ENCODE measurements at regions of chr3 and their contacts with region 1.

Region 1: GRCh38 chr3:134485718-134486576 is at the starts of genes ANAPC13 and CEP63:
- DNase-seq: peak; percentile 85 to 98 (median 92)
- ATAC-seq: peak; percentile 81 to 89 (median 84)
- H3K4me3 ChIP-seq: peak within 1 kb of the TSS; percentile 92 to 96
- H3K4me3 Mint-ChIP-seq: peak within 1 kb of the TSS; percentile 93 to 98 (median 94)
- H3K27ac ChIP-seq: peak within 1 kb of the TSS; percentile 86
- H3K27ac Mint-ChIP-seq: peak within 1 kb of the TSS; percentile 96 to 98
- H3K4me1 ChIP-seq: peaks cover 21 to 28% of the 10 kb centered on the region in 2 experiments
- H3K4me1 Mint-ChIP-seq: peaks cover 58 to 70% (median 59%) of the 10 kb centered on the region in 3 donors
- H3K27me3 ChIP-seq: no peaks in the 10 kb centered on the region
- H3K27me3 Mint-ChIP-seq: no peaks in the 10 kb centered on the region
- total RNA-seq, gene ANAPC13: 20.7 to 31.8 (median 22.6) TPM
- total RNA-seq, gene CEP63: 21.7 to 26.1 (median 24.6) TPM

Region 2: DNA sequence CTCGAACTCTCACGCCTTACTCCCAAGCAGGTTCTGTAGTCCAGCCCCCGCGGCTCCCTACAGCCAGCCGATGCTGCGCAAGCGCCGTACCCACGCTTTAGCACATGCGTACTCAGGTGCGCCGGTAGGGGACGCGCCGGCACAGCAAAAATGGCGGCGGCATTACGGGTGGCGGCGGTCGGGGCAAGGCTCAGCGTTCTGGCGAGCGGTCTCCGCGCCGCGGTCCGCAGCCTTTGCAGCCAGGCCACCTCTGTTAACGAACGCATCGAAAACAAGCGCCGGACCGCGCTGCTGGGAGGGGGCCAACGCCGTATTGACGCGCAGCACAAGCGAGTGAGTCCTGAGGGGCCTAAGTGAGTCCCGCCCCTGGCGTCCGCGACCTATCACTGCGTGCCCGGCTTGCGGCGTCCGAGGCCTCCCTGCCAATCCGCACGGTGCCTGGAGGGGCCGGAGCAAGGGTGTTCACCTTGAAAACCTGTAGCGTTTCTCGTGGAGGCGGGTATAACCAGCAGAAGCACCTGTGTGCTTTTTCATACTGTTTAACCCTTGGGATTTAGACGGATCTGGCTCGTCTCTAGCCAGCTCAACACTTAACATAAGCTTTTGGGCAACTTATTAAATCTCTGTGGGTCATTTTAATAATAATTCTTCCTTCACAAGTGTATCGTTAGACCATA is 1764.4 kb after region 1 on chr3 and contains the start of gene PCCB:
- CTCF ChIA-PET with region 1: no interaction called
- POLR2A ChIA-PET with region 1: interaction called in 1 of 2 experiments, 11 read pairs
- DNase-seq: peak; percentile 84 to 96 (median 89)
- ATAC-seq: peak; percentile 98 to 99 (median 99)
- H3K4me3 ChIP-seq: peak within 1 kb of the TSS; percentile 70 to 80
- H3K4me3 Mint-ChIP-seq: peak within 1 kb of the TSS; percentile 83 to 90 (median 88)
- H3K27ac ChIP-seq: peak within 1 kb of the TSS; percentile 65
- H3K27ac Mint-ChIP-seq: peak within 1 kb of the TSS; percentile 91 to 92
- H3K4me1 ChIP-seq: peaks cover 8 to 17% of the 10 kb centered on the region in 2 experiments
- H3K4me1 Mint-ChIP-seq: peaks cover 19 to 27% (median 22%) of the 10 kb centered on the region in 3 donors
- H3K27me3 ChIP-seq: no peaks in the 10 kb centered on the region
- H3K27me3 Mint-ChIP-seq: no peaks in the 10 kb centered on the region
- total RNA-seq, gene PCCB: 13.8 to 19.3 (median 16.1) TPM

Measured in T-cell (primary cell).